Activated naive CD4-positive, alpha-beta T cell treated with anti-CD3 and anti-CD28 coated beads, Interleukin-2, amount 10 ng/mL, durations not matched to agents 7 days and 5 days (primary cell): ENCODE measurements at regions of chr9 and their contacts with region 1.

Region 1: DNA sequence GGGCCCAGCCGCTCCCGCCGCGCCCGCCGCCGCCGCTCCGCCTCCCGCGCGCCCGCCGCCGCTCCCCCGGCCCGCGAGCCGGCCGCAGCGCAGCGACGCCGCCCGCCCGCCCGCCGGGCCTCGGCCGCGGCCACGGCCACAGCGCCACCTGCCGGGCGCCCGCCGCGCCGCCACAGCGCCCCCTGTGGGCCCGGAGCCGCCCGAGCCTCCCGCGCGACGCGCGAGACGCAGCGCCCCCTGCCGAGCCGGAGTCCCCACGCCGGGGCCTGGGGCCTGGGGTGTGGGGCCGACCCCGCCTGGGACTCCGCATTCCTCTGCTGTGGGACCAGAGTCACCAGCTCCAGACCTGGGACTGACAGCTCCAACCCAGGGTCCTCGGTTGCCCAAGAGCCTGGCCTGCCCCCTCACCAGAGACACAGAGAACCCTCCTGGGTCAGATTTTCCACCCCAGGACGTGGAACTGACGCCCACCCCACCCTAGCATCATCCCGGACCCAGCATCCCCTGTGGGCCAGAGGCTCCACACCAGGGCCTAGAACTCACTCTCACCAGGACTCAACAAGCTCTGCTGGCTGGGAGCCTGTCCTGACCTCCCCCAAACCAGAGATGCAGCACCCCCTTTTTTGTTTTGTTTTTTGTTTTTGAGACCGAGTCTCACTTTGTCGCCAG is at the start of gene RAPGEF1:
- DNase-seq: peak; percentile 80
- H3K4me3 Mint-ChIP-seq: peak within 1 kb of the TSS; percentile 88
- H3K27ac Mint-ChIP-seq: peak within 1 kb of the TSS; percentile 87
- H3K4me1 Mint-ChIP-seq: peaks cover 67% of the 10 kb centered on the region
- H3K27me3 Mint-ChIP-seq: no peaks in the 10 kb centered on the region

Region 2: GRCh38 chr9:131237931-131238401 is 502.1 kb before region 1 on chr9:
- CTCF ChIA-PET with region 1: no interaction called
- DNase-seq: peak; percentile 92
- H3K4me3 Mint-ChIP-seq: peak overlapping the region; percentile 62
- H3K27ac Mint-ChIP-seq: peak overlapping the region; percentile 96
- H3K4me1 Mint-ChIP-seq: peaks cover 56% of the 10 kb centered on the region
- H3K27me3 Mint-ChIP-seq: no peaks in the 10 kb centered on the region

Region 3: GRCh38 chr9:131598121-131598520 is 142.0 kb before region 1 on chr9:
- CTCF ChIA-PET with region 1: interaction called, 148 read pairs
- DNase-seq: no peak
- H3K4me3 Mint-ChIP-seq: no peak overlapping the region
- H3K27ac Mint-ChIP-seq: no peak overlapping the region
- H3K4me1 Mint-ChIP-seq: peaks cover 2% of the 10 kb centered on the region
- H3K27me3 Mint-ChIP-seq: no peaks in the 10 kb centered on the region

Region 4: DNA sequence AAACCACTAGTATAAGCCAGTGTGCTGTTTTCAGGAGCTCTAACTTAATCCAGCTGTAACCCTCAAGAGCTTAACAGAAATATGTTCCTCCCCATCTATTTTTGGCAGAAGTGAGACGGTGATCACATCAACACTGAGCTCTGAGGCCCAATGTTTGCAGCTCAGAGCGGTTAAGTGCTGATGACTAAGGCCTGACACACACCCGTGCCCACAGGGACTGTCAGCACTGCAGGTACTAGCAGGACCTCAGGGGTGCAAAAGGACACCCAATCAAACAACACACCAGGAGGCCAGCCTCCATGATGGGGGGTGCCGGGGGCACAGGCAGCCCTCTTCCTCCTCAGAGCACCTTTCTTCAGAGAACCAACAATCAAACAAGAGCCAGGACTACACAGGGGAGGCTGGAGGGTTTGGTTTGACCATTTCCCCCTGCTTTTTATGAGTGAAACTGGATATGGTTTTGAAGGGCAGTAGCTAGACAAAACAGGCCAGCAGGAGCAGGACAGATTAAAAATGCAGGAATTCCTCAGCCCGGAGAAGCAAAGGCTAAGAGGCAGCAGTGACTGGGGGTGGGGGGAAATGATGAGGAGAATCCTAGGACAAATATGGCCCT is 61.5 kb before region 1 on chr9:
- CTCF ChIA-PET with region 1: interaction called, 18 read pairs
- DNase-seq: peak; percentile 77
- H3K4me3 Mint-ChIP-seq: peak overlapping the region; percentile 16
- H3K27ac Mint-ChIP-seq: peak overlapping the region; percentile 88
- H3K4me1 Mint-ChIP-seq: peaks cover 68% of the 10 kb centered on the region
- H3K27me3 Mint-ChIP-seq: no peaks in the 10 kb centered on the region

Region 5: GRCh38 chr9:132125944-132126720 is 386.0 kb after region 1 on chr9:
- CTCF ChIA-PET with region 1: no interaction called
- DNase-seq: no peak
- H3K4me3 Mint-ChIP-seq: no peak overlapping the region
- H3K27ac Mint-ChIP-seq: no peak overlapping the region
- H3K4me1 Mint-ChIP-seq: peaks cover 12% of the 10 kb centered on the region
- H3K27me3 Mint-ChIP-seq: peaks cover 74% of the 10 kb centered on the region